ENCODE measurements at regions of chr2 and their contacts with region 1.

Region 1: DNA sequence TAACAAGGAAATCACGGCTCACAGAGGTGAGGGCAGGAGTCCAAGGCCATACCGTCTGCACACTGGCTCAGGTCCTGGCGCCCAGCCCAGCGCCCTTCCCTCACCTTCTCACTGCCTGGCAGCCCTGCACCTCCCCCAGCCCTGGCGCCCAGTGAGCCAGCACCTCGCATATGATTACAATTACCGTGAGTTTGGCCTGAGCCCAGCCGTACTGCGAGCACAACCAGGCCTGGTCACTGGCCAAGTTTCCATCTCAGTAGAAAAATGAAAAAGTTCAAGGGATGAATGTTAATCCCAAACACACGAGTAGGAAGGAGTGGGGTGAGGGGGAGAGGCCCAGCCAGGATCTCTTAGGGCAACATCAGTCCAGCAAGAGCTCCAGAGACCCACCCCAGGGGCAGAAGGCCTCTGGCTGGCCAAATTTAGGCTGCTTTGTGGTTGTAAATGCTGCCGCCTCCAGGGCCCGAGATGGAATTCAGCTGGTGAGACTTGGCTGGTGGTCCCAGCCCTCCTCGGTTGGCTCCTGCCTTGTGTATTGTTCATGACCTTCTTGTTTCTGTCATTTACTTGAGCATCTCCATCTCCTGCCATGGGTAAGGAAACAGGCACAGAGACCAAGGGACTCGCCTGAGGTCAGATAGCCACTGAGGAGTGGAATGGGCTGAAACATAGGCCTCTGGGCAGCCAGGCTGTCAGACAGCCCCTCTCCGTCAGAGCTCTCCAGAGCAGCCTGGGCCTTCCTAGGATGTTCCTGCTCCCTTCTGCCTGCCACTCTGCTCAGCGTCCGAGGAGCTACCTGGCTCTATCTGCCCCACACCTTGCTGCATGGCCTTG is 68.2 kb downstream of the MCFD2 start:
- DNase-seq: peak; percentile 94

Region 2: DNA sequence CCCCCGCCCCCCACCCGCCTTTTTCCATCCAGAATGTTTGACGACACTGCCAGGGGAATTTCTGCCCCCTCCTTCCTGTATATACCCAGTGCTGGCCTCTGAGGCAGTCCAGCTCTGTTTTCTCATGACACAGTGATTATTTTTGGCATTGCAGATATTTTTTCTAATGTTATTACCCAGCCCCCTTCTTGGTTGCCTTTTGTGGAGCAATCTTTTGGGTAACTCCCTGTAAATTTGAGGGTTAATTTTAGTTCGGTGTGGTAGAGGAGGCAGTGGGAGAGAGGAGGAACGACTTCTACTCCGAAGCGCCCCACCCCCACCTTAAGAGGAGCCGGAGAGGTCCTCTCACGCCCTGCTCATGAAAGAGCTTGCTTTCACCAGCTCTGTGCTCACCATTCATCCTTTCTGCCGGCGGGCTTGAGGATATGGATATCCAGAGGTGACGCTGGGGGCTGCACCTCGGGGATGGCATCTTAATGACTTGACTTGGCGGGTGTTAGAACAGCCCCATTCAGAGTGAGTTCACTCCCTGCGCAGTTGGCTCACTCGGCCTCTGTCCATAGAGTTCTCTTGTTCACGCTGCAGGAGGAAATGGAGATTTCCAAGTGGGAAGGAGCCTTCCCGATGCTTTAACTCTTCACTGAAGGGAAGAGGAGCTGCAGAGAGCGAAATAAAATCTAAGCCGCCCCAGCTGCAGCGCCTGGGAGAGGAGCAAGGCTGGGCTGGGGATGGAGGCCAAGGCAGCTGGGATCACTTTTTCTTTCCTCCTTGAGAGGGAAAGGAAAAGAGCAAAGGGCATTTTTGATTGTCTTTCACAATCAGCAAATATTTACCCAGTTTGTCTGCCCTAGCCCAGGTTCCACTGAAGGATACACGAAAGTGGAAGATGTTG is 511.8 kb before region 1 on chr2:
- intact Hi-C with region 1: loop called (anchors 10 kb)
- DNase-seq: no peak

Region 3: DNA sequence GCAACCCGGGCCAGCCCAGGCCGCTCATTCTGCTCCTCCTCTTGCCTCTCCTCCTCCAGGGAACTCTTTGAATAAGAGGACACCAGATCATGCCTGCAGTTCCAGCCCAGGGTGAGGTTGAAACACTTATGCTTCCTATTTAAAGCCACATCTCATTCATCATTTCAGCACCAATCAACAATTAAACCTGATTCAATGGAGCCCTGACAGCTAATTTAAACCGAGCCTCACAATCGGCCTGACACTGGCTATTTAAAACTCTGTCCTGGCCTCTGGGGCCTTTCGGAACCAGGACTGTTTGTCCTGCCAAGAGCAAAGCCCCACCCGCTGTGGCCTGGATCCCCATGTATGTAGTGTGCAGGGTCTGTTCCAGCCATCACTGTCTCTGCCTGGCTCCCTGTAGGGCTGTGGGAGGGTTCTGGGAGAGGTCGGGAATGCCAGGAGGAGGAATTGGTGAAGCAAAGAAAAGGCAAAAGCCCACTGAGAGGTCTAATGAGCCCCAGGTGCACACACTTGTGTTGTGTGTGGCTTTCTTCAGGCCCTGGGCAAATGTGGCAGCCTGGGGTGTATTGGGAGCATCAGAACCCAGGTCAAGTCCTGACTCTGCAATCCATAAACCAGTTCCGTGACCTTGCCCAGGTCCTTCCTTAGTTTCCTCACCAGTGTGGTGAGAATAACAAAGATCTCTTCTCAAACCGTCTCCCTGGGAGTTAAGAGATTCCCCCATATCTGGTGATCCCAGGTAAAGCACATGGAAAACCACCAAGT is 29.1 kb before region 1 on chr2:
- intact Hi-C with region 1: loop called (anchors 1 kb)
- DNase-seq: peak; percentile 91

Region 4: DNA sequence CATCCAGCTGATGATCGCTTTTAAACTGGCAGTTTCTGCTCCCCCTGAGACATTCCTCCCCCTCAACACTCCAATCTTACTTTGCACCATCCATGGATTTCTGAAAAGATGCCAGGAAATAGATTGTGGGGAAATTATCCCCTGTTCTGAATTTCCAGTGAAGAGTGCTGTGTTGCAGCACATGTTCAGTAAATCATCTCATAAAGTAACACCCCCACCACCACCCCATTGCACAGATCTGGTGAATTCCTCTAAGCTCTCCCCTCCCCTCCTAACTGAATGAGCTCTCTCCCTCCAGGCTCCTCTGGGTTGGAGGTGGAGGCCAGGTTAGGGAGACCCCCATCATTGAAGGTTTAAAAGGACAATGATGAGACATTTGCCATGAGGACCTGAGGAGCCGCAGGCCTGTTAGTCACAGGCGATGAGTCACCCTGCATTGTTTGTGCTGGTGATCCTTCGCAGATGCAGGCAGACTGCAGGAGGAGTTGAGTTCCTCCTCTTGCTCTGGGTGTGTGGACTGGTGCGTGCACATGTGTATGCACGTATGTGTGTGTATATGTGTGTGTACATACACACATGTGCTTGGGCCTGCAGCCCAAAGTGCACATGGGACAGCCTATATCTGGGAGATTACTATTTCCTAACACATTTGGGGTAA is 26.1 kb after region 1 on chr2:
- intact Hi-C with region 1: loop called (anchors 2 kb)
- DNase-seq: peak; percentile 87

Measured in cardiac septum (tissue), 1 donor.